PC-3 (cell line): ENCODE measurements at regions of chr12 and their contacts with region 1.

Region 1: DNA sequence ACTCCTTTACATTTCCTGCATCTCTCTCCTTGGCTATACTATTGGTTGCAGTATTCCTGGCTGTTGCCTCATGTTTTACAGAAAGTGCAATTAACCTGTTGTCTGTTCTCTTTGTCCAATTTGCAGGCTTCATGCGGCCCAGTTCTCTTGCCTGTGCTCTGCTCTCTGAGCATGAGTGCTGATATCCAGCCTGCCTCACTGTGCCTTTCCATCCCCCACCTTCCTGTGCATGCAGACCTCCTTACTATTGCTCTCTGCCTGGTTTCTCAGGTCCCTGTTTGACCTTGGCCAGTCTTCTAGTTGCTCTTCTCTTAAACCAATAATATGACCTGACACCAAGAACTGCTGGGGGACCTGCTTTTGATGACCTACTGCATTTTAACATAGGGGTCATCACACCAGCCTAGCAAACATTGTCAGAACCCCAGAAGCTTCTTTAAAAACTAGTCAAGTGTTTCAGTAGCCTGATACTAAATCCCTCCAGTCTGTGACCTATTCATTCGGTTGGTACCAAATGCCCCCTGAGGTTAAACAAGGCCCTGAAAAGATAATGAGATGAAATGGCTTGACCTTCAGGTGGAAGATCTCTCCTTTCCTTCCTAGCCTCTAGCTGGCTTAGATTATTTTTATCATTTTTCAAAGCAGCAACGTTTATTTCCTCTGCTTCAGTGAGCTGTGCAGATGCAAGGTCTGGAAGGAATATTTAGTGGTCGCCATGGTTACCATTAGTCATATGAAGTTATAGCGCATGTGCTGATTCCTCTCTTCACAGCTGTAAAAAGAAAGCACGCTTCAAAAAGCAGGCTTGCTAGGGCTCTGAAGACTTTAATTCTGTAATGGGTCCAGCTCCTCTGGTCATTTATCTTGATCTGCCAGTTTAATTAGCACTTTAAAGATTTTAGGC is 216.5 kb downstream of the PHLDA1 start:
- DNase-seq: peak; percentile 71
- ATAC-seq: peak; percentile 60
- H3K4me3 ChIP-seq: no peak overlapping the region
- H3K27ac ChIP-seq: peak overlapping the region; percentile 39
- H3K4me1 ChIP-seq: peaks cover 29% of the 10 kb centered on the region
- H3K27me3 ChIP-seq: no peaks in the 10 kb centered on the region
- CTCF ChIP-seq: no peak

Region 2: GRCh38 chr12:75526655-75527511 is 288.2 kb before region 1 on chr12:
- CTCF ChIA-PET with region 1: interaction called, 6 read pairs
- POLR2A ChIA-PET with region 1: no interaction called
- intact Hi-C with region 1: loop called (anchors 2 kb)
- DNase-seq: peak; percentile 75
- ATAC-seq: peak; percentile 76
- H3K4me3 ChIP-seq: no peak overlapping the region
- H3K27ac ChIP-seq: no peak overlapping the region
- H3K4me1 ChIP-seq: no peaks in the 10 kb centered on the region; the same call in 1 of the 2 replicates
- H3K27me3 ChIP-seq: no peaks in the 10 kb centered on the region
- CTCF ChIP-seq: peak; percentile 87

Region 3: GRCh38 chr12:75560167-75560566 is 254.9 kb before region 1 on chr12:
- CTCF ChIA-PET with region 1: no interaction called
- POLR2A ChIA-PET with region 1: interaction called, 3 read pairs
- intact Hi-C with region 1: loop called (anchors 1 kb)
- DNase-seq: peak; percentile 63
- ATAC-seq: peak; percentile 94
- H3K4me3 ChIP-seq: no peak overlapping the region
- H3K27ac ChIP-seq: no peak overlapping the region
- H3K4me1 ChIP-seq: peaks cover 12% of the 10 kb centered on the region
- H3K27me3 ChIP-seq: no peaks in the 10 kb centered on the region
- CTCF ChIP-seq: peak; percentile 66

Region 4: GRCh38 chr12:75722714-75723200 is 92.3 kb before region 1 on chr12:
- CTCF ChIA-PET with region 1: no interaction called
- POLR2A ChIA-PET with region 1: no interaction called
- intact Hi-C with region 1: loop called (anchors 5 kb)
- DNase-seq: peak; percentile 88
- ATAC-seq: peak; percentile 37
- H3K4me3 ChIP-seq: no peak overlapping the region
- H3K27ac ChIP-seq: peak overlapping the region; percentile 75
- H3K4me1 ChIP-seq: peaks cover 55% of the 10 kb centered on the region
- H3K27me3 ChIP-seq: no peaks in the 10 kb centered on the region
- CTCF ChIP-seq: no peak

Region 5: DNA sequence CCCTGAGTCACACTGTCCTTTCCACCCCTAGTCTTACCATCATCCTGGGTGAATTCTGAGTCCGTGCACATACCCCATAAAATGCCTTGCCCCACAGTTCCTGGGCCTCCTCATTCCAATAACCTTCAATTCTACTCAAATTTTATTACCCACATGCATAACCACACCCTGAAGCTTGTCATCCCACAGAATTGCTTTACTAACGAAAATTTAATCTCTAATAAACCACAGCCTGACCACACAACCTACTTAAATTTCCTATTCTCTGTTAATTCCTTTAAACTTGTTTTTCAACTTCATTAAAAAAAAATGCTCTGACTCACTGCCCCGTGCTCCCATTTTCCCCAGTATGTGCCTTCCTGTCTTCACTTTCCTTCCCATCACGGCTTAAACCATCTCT is 10.6 kb after region 1 on chr12:
- CTCF ChIA-PET with region 1: no interaction called
- POLR2A ChIA-PET with region 1: no interaction called
- intact Hi-C with region 1: loop called (anchors 1 kb)
- DNase-seq: peak; percentile 96
- ATAC-seq: peak; percentile 92
- H3K4me3 ChIP-seq: no peak overlapping the region; the same call in 1 of the 2 replicates
- H3K27ac ChIP-seq: peak overlapping the region; percentile 97
- H3K4me1 ChIP-seq: peaks cover 37% of the 10 kb centered on the region
- H3K27me3 ChIP-seq: no peaks in the 10 kb centered on the region
- CTCF ChIP-seq: no peak

Region 6: GRCh38 chr12:75862692-75863471 is 47.8 kb after region 1 on chr12:
- CTCF ChIA-PET with region 1: interaction called, 3 read pairs
- POLR2A ChIA-PET with region 1: no interaction called
- intact Hi-C with region 1: loop called (anchors 2 kb)
- DNase-seq: peak; percentile 97
- ATAC-seq: peak; percentile 77
- H3K4me3 ChIP-seq: peak overlapping the region; percentile 36; the same call in 1 of the 2 replicates
- H3K27ac ChIP-seq: peak overlapping the region; percentile 98
- H3K4me1 ChIP-seq: peaks cover 57% of the 10 kb centered on the region
- H3K27me3 ChIP-seq: no peaks in the 10 kb centered on the region
- CTCF ChIP-seq: no peak

Region 7: GRCh38 chr12:75944097-75944904 is 129.2 kb after region 1 on chr12:
- CTCF ChIA-PET with region 1: no interaction called
- POLR2A ChIA-PET with region 1: interaction called, 4 read pairs
- intact Hi-C with region 1: loop called (anchors 2 kb)
- DNase-seq: peak; percentile 96
- ATAC-seq: peak; percentile 86
- H3K4me3 ChIP-seq: peak overlapping the region; percentile 23; the same call in 1 of the 2 replicates
- H3K27ac ChIP-seq: peak overlapping the region; percentile 98
- H3K4me1 ChIP-seq: peaks cover 23% of the 10 kb centered on the region
- H3K27me3 ChIP-seq: no peaks in the 10 kb centered on the region
- CTCF ChIP-seq: no peak

Region 8: GRCh38 chr12:75996861-75997447 is 181.9 kb after region 1 on chr12:
- CTCF ChIA-PET with region 1: no interaction called
- POLR2A ChIA-PET with region 1: no interaction called
- intact Hi-C with region 1: no loop called
- DNase-seq: peak; percentile 47
- ATAC-seq: peak; percentile 59
- H3K4me3 ChIP-seq: no peak overlapping the region
- H3K27ac ChIP-seq: peak overlapping the region; percentile 32
- H3K4me1 ChIP-seq: peaks cover 50% of the 10 kb centered on the region
- H3K27me3 ChIP-seq: no peaks in the 10 kb centered on the region
- CTCF ChIP-seq: no peak